Activated B cell treated with CpG ODN at 0.5 μM for 24 hours (primary cell): ENCODE measurements at regions of chr6 and their contacts with region 1.

Region 1: GRCh38 chr6:135002229-135002844 is 52.3 kb downstream of the HBS1L start:
- DNase-seq: no peak
- ATAC-seq: peak; percentile 37
- H3K4me3 Mint-ChIP-seq: no peak overlapping the region
- H3K27ac Mint-ChIP-seq: no peak overlapping the region
- H3K4me1 Mint-ChIP-seq: peaks cover 7% of the 10 kb centered on the region
- H3K27me3 Mint-ChIP-seq: no peaks in the 10 kb centered on the region
- CTCF ChIP-seq: no peak

Region 2: GRCh38 chr6:135018941-135019340 is 16.6 kb after region 1 on chr6:
- CTCF ChIA-PET with region 1: no interaction called
- POLR2A ChIA-PET with region 1: interaction called, 6 read pairs
- intact Hi-C with region 1: loop called (anchors 2 kb)
- DNase-seq: no peak
- ATAC-seq: no peak
- H3K4me3 Mint-ChIP-seq: no peak overlapping the region
- H3K27ac Mint-ChIP-seq: no peak overlapping the region
- H3K4me1 Mint-ChIP-seq: peaks cover 9% of the 10 kb centered on the region
- H3K27me3 Mint-ChIP-seq: no peaks in the 10 kb centered on the region
- CTCF ChIP-seq: no peak

Region 3: GRCh38 chr6:135085700-135086413 is 83.5 kb after region 1 on chr6:
- CTCF ChIA-PET with region 1: no interaction called
- POLR2A ChIA-PET with region 1: no interaction called
- intact Hi-C with region 1: no loop called
- DNase-seq: no peak
- ATAC-seq: no peak
- H3K4me3 Mint-ChIP-seq: peak overlapping the region; percentile 36
- H3K27ac Mint-ChIP-seq: no peak overlapping the region
- H3K4me1 Mint-ChIP-seq: peaks cover 34% of the 10 kb centered on the region
- H3K27me3 Mint-ChIP-seq: peaks cover 2% of the 10 kb centered on the region
- CTCF ChIP-seq: no peak

Region 4: GRCh38 chr6:135438907-135439535 is 436.7 kb after region 1 on chr6:
- CTCF ChIA-PET with region 1: no interaction called
- POLR2A ChIA-PET with region 1: no interaction called
- intact Hi-C with region 1: loop called (anchors 5 kb)
- DNase-seq: no peak
- ATAC-seq: peak; percentile 25
- H3K4me3 Mint-ChIP-seq: no peak overlapping the region
- H3K27ac Mint-ChIP-seq: no peak overlapping the region
- H3K4me1 Mint-ChIP-seq: peaks cover 22% of the 10 kb centered on the region
- H3K27me3 Mint-ChIP-seq: no peaks in the 10 kb centered on the region
- CTCF ChIP-seq: no peak